ENCODE measurements at regions of chr2 and their contacts with region 1.

Region 1: DNA sequence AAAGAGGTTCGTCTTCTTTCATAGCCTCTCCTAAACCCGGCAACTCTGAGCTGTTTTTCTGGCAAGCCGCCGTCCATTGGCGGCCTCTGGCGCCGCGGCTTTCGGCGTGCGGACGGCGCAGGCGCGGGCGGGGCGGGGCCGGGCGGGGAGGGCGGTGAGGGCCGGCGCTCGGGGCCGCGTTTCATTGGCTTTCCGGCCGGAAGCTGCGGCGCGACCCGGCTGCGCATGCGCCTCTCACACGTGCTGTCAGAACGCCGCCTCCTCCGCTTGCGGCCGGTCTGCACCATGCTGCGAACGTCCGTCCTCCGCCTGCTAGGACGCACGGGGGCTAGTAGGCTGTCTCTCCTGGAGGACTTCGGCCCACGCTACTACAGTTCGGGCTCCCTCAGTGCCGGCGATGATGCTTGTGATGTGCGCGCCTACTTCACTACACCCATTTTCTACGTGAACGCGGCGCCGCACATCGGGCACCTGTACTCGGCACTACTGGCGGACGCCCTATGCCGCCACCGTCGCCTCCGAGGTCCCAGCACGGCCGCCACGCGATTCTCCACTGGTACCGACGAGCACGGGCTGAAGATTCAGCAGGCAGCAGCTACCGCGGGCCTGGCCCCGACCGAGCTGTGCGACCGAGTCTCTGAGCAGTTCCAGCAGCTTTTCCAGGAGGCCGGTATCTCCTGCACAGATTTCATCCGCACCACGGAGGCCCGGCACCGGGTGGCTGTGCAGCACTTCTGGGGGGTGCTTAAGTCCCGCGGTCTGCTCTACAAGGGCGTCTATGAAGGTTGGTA is at the start of gene MARS2:
- DNase-seq: peak; percentile 92
- H3K4me3 Mint-ChIP-seq: peak within 1 kb of the TSS; percentile 92
- H3K27ac Mint-ChIP-seq: peak within 1 kb of the TSS; percentile 57
- H3K4me1 Mint-ChIP-seq: peaks cover 26% of the 10 kb centered on the region
- H3K27me3 Mint-ChIP-seq: no peaks in the 10 kb centered on the region
- CTCF ChIP-seq: no peak
- total RNA-seq, gene MARS2: 9.5 and 15.3 TPM in 2 replicates

Region 2: GRCh38 chr2:197399887-197400540 is 305.3 kb before region 1 on chr2:
- CTCF ChIA-PET with region 1: no interaction called
- POLR2A ChIA-PET with region 1: no interaction called
- intact Hi-C with region 1: loop called (anchors 10 kb)
- DNase-seq: no peak
- H3K4me3 Mint-ChIP-seq: no peak overlapping the region
- H3K27ac Mint-ChIP-seq: no peak overlapping the region
- H3K4me1 Mint-ChIP-seq: no peaks in the 10 kb centered on the region
- H3K27me3 Mint-ChIP-seq: no peaks in the 10 kb centered on the region
- CTCF ChIP-seq: no peak

Region 3: GRCh38 chr2:197453161-197453914 is 252.0 kb before region 1 on chr2 and contains the start of gene COQ10B:
- CTCF ChIA-PET with region 1: no interaction called
- POLR2A ChIA-PET with region 1: interaction called, 10 read pairs
- intact Hi-C with region 1: loop called (anchors 5 kb)
- DNase-seq: peak; percentile 99
- H3K4me3 Mint-ChIP-seq: peak within 1 kb of the TSS; percentile 99
- H3K27ac Mint-ChIP-seq: peak within 1 kb of the TSS; percentile 100
- H3K4me1 Mint-ChIP-seq: peaks cover 16% of the 10 kb centered on the region
- H3K27me3 Mint-ChIP-seq: no peaks in the 10 kb centered on the region
- CTCF ChIP-seq: no peak
- total RNA-seq, gene COQ10B: 21.3 and 22.8 TPM in 2 replicates

Region 4: DNA sequence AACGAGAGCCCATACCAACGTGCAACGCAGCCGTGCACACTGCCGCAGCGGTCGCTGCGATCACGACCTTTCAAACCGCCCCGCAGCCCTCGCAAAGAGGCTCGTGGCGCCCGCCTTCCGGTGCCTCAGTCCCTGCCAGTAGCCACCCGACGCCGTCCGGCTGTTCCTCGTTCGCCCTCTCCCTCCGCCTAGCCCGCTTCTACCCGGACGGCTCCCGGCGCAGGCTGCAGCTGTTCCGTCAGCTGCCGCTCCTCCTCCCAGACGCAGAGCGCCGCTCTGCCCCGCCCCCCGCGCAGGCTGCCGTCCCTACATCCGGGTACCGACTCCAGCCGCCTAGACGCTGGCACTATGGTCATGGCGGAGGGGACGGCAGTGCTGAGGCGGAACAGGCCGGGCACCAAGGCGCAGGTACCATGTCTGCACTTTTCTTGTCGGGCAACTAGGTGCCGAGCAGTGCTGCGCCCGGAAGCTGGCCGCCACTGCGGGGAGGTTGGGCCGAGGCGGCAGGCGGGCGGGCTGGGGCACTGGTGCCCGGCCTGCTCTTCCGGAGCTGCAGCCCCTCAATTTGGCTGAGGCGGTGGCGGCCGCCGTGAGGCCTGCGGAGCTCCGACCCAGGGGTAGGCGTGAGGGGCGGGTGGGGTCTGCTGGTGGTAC is 189.4 kb before region 1 on chr2 and contains the start of gene MOB4:
- CTCF ChIA-PET with region 1: interaction called, 4 read pairs
- POLR2A ChIA-PET with region 1: interaction called, 30 read pairs
- intact Hi-C with region 1: no loop called
- DNase-seq: peak; percentile 92
- H3K4me3 Mint-ChIP-seq: peak within 1 kb of the TSS; percentile 96
- H3K27ac Mint-ChIP-seq: peak within 1 kb of the TSS; percentile 98
- H3K4me1 Mint-ChIP-seq: peaks cover 15% of the 10 kb centered on the region
- H3K27me3 Mint-ChIP-seq: no peaks in the 10 kb centered on the region
- CTCF ChIP-seq: no peak
- total RNA-seq, gene MOB4: 15.6 and 20.5 TPM in 2 replicates

Region 5: GRCh38 chr2:197538412-197538811 is 166.9 kb before region 1 on chr2:
- CTCF ChIA-PET with region 1: no interaction called
- POLR2A ChIA-PET with region 1: no interaction called
- intact Hi-C with region 1: no loop called
- DNase-seq: no peak
- H3K4me3 Mint-ChIP-seq: no peak overlapping the region
- H3K27ac Mint-ChIP-seq: no peak overlapping the region
- H3K4me1 Mint-ChIP-seq: no peaks in the 10 kb centered on the region
- H3K27me3 Mint-ChIP-seq: no peaks in the 10 kb centered on the region
- CTCF ChIP-seq: no peak

Region 6: GRCh38 chr2:197717858-197718257 is 12.5 kb after region 1 on chr2:
- CTCF ChIA-PET with region 1: interaction called, 15 read pairs
- POLR2A ChIA-PET with region 1: interaction called, 6 read pairs
- intact Hi-C with region 1: no loop called
- DNase-seq: no peak
- H3K4me3 Mint-ChIP-seq: no peak overlapping the region
- H3K27ac Mint-ChIP-seq: no peak overlapping the region
- H3K4me1 Mint-ChIP-seq: peaks cover 4% of the 10 kb centered on the region
- H3K27me3 Mint-ChIP-seq: no peaks in the 10 kb centered on the region
- CTCF ChIP-seq: no peak

Region 7: DNA sequence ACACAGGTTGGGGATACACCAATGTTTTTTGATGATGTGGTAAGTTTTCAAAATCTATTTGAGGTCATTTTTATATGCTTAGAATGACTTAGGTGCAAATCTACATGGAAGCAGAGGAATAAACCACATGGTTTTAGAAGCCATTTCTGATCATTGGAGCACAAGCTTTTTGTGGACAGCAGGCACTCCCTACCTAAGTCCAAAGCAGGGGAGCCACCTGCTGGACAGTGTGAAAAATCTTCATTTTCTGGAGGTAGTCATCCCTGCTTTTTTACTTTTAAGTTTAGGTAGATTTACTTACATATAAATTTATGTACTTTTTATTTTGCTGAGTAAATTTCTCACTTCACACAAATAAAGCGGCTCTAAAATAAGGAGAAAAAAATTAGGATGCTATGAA is 422.3 kb after region 1 on chr2:
- CTCF ChIA-PET with region 1: interaction called, 6 read pairs
- POLR2A ChIA-PET with region 1: no interaction called
- intact Hi-C with region 1: loop called (anchors 10 kb)
- DNase-seq: peak; percentile 76
- H3K4me3 Mint-ChIP-seq: no peak overlapping the region
- H3K27ac Mint-ChIP-seq: no peak overlapping the region
- H3K4me1 Mint-ChIP-seq: no peaks in the 10 kb centered on the region
- H3K27me3 Mint-ChIP-seq: peaks cover 35% of the 10 kb centered on the region
- CTCF ChIP-seq: peak; percentile 62

Region 8: DNA sequence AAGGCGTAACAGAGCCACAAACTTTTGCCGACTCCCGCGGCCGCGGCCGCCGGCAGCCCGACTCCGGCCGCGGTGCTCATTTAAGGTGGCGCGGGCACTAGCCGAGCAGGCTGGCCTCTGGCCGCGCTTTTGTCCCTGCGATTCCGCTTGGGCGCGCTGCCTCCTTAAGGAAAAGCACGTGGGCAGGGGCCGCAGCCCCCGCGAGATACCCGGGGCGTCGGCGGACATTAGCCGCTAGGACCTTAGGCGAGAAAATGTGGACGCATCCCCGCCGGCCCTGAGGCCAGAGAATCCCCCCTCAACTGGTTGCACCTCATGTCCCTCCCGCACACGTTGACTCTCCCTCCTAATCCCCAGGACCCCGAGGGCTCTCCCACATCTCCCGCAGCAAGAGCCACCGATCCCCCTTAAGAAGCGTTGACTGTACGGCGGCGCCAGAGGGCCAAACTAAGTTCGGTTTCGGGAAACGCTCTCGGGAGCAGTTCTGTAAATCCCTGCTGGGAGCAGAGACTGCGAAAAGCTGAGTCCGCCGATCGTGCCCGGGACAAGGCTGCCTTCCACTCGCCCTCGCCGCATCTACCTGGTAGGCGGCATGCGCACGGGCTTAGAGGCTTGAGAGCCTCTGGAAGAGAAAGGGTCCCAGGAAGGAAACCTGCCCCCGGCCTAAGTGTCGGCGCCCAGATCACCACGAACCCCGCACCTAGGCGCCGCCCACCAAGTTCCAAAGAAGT is 1754.1 kb after region 1 on chr2:
- CTCF ChIA-PET with region 1: no interaction called
- POLR2A ChIA-PET with region 1: interaction called, 3 read pairs
- intact Hi-C with region 1: loop called (anchors 10 kb)
- DNase-seq: peak; percentile 94
- H3K4me3 Mint-ChIP-seq: peak overlapping the region; percentile 77
- H3K27ac Mint-ChIP-seq: peak overlapping the region; percentile 84
- H3K4me1 Mint-ChIP-seq: peaks cover 5% of the 10 kb centered on the region
- H3K27me3 Mint-ChIP-seq: no peaks in the 10 kb centered on the region
- CTCF ChIP-seq: no peak